CD4-positive, alpha-beta T cell (primary cell): ENCODE measurements at regions of chr2 and their contacts with region 1.

Region 1: DNA sequence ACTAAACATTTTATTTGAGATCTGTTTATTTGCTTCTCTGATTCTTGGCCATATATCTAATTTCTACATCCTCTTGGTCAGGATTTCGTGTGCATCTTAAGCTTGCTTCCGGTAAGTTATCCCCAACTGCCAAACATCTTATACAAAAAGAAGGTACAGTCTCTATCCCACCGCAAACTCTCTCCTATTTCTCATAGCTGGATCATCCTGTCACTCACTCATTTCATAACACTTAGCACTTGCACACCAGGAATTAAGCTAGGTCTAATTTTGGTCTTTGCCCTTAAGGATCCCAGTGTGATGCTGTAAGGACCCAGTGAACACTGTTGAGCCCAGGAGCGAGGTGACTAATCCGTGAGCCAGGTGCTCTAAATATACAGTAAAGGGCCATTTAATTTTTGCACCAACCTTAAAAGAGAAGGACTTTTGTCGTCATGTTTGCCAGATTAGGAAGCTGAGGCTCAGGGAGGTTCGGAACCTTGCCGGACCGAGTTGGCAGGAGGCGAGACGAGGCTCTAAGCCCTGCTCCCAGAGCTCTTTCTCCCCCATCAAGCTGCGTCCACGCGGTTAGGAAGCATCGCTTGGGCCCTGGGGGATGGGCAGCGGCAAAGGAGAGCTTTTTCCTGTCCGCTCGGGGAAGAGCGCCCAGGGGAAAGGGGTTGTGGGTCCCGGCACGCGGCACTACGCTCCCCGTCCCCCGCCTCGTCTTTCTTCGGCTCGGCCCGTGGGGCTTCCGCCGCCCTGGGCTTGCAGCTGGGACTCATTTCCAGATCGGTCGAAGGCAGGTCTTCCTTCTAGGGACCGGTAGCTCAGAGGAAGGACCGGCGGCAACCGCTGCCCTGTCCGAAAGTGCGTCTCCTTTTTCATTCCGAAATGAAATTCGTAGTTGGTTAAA is 4.1 kb upstream of the ITPRIPL1 start:
- DNase-seq: peak in 6 of 14 experiments; percentile 1 to 50 (median 24)
- ATAC-seq: no peak
- H3K4me3 ChIP-seq: peak overlapping the region; percentile 92
- H3K4me3 Mint-ChIP-seq: peak overlapping the region; percentile 84
- H3K27ac ChIP-seq: peak overlapping the region in 1 of 2 donors; percentile 63
- H3K27ac Mint-ChIP-seq: peak overlapping the region; percentile 16
- H3K4me1 ChIP-seq: peaks cover 64% of the 10 kb centered on the region
- H3K4me1 Mint-ChIP-seq: peaks cover 46% of the 10 kb centered on the region
- H3K27me3 ChIP-seq: no peaks in the 10 kb centered on the region
- H3K27me3 Mint-ChIP-seq: peaks cover 3% of the 10 kb centered on the region
- CTCF ChIP-seq: no peak

Region 2: DNA sequence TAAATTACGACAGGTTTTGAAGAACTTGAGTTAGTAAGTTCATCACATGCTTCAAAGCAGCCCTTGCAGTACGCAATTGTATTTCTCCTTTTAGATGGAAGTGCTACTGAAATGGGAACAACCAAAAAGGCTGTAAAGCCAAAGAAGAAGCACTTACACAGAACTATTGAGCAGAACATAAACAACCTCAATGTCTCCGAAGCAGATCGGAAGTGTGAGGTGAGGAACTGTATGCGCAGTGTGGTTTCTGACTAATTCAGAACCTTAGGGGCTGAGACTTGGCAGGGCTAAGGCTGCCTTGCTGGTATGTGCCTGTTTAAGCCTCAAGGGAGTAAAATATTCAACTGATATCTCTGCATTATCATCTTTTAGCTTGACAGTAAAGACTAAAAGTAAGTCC is 23.0 kb after region 1 on chr2:
- CTCF ChIA-PET with region 1: interaction called, 18 read pairs
- POLR2A ChIA-PET with region 1: interaction called, 6 read pairs
- intact Hi-C with region 1: no loop called
- DNase-seq: peak in 11 of 14 experiments; percentile 27 to 84 (median 42)
- ATAC-seq: peak; percentile 84
- H3K4me3 ChIP-seq: no peak overlapping the region
- H3K4me3 Mint-ChIP-seq: no peak overlapping the region
- H3K27ac ChIP-seq: peak overlapping the region in 1 of 2 donors; percentile 49
- H3K27ac Mint-ChIP-seq: peak overlapping the region; percentile 80
- H3K4me1 ChIP-seq: peaks cover 31% of the 10 kb centered on the region
- H3K4me1 Mint-ChIP-seq: peaks cover 29% of the 10 kb centered on the region
- H3K27me3 ChIP-seq: no peaks in the 10 kb centered on the region
- H3K27me3 Mint-ChIP-seq: no peaks in the 10 kb centered on the region
- CTCF ChIP-seq: no peak